Transverse colon (tissue), 4 donors: ENCODE measurements at regions of chr1 and their contacts with region 1.

Region 1: GRCh38 chr1:154884869-154885701 is 15.0 kb upstream of the KCNN3 start:
- DNase-seq: no peak
- H3K4me3 ChIP-seq: no peak overlapping the region
- H3K27ac ChIP-seq: no peak overlapping the region
- H3K4me1 ChIP-seq: no peaks in the 10 kb centered on the region
- H3K27me3 ChIP-seq: no peaks in the 10 kb centered on the region
- CTCF ChIP-seq: no peak
- EP300 ChIP-seq: no peak
- POLR2A ChIP-seq: no peak

Region 2: GRCh38 chr1:154574716-154575115 is 310.4 kb before region 1 on chr1:
- in situ Hi-C with region 1: loop called in 2 of 4 experiments (anchors 10 to 25 kb)
- intact Hi-C with region 1: no loop called
- DNase-seq: no peak
- H3K4me3 ChIP-seq: no peak overlapping the region
- H3K27ac ChIP-seq: no peak overlapping the region
- H3K4me1 ChIP-seq: no peaks in the 10 kb centered on the region
- H3K27me3 ChIP-seq: no peaks in the 10 kb centered on the region
- CTCF ChIP-seq: no peak
- EP300 ChIP-seq: no peak
- POLR2A ChIP-seq: no peak